H1 (cell line): ENCODE measurements at regions of chr21 and their contacts with region 1.

Region 1: DNA sequence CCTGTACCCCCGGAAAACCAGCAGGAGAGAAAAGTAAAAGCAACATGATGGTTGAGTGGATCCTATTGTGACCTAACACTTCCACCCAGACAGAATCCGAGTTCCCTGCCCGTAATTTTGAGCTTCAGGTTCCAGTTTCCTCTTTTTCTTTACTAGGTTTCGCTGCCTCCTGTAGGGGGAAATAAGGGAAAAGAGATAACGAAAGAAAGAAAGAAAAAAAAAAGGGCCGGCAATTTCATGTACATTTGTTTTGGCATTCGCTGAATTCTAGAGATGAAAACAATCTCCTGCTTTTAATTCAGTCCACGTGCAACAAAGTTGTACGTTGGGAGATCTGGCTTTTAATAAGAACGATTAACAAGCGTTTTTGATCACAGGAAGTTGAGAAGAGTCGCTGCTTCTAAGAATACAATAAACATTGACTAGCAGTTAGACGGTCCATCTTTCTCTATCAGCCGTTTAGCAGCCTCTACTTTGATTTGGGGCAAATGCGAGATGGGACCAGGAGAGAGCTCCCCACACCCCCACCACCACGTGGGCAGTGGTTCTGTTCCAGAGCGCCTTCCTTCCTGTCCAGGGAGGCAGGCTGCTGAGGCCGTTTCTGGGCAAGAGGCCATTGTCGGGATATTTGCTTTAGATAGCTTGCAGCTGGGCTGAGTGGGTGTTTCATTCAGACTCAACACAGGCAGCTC is 155.9 kb upstream of the RUNX1 start:
- DNase-seq: no peak
- H3K4me3 ChIP-seq: no peak overlapping the region
- H3K27ac ChIP-seq: no peak overlapping the region
- H3K4me1 ChIP-seq: peaks cover 0 to 2% (median under 1%) of the 10 kb centered on the region in 4 experiments; a peak in 3 of 7 replicates
- H3K27me3 ChIP-seq: no peaks in the 10 kb centered on the region
- CTCF ChIP-seq: peak in 1 of 3 experiments; percentile 12; a peak in 2 of 4 replicates
- EP300 ChIP-seq: no peak
- POLR2A ChIP-seq: no peak
- RAD21 ChIP-seq: peak; percentile 22 to 36; a peak in 3 of 4 replicates

Region 2: DNA sequence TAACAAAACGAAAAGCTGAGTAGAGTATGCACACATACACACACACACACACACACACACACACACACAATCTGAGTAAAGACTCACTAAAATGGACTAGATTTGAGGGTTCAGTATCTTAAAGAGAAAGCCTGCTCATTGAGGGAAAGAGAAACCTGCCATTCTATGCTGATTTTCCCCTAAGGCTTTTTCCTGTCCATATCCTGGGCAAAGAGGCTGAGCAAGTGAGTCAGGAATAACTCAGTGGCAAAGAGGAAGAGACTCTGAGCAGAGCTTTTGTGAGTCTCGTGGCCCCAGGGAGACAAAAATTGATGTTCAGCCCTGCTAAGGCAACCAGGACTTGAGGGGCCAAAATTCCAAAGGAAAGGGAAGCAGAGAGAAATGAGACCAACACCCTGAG is 118.6 kb before region 1 on chr21:
- CTCF ChIA-PET with region 1: no interaction called
- POLR2A ChIA-PET with region 1: no interaction called
- DNase-seq: no peak
- H3K4me3 ChIP-seq: no peak overlapping the region
- H3K27ac ChIP-seq: no peak overlapping the region
- H3K4me1 ChIP-seq: no peaks in the 10 kb centered on the region
- H3K27me3 ChIP-seq: no peaks in the 10 kb centered on the region
- CTCF ChIP-seq: no peak
- EP300 ChIP-seq: no peak
- POLR2A ChIP-seq: no peak
- RAD21 ChIP-seq: no peak

Region 3: GRCh38 chr21:35217504-35218060 is 12.6 kb after region 1 on chr21:
- CTCF ChIA-PET with region 1: interaction called, 11 read pairs
- POLR2A ChIA-PET with region 1: no interaction called
- DNase-seq: peak in 1 of 2 experiments; percentile 15
- H3K4me3 ChIP-seq: no peak overlapping the region
- H3K27ac ChIP-seq: no peak overlapping the region
- H3K4me1 ChIP-seq: no peaks in the 10 kb centered on the region
- H3K27me3 ChIP-seq: no peaks in the 10 kb centered on the region
- CTCF ChIP-seq: no peak
- EP300 ChIP-seq: no peak
- POLR2A ChIP-seq: no peak
- RAD21 ChIP-seq: no peak